ENCODE measurements at regions of chr7 and their contacts with region 1.

Region 1: GRCh38 chr7:40232242-40232893 is 97.6 kb downstream of the SUGCT start:
- DNase-seq: no peak
- H3K4me3 ChIP-seq: no peak overlapping the region
- H3K27ac ChIP-seq: no peak overlapping the region
- H3K4me1 ChIP-seq: no peaks in the 10 kb centered on the region
- H3K27me3 ChIP-seq: no peaks in the 10 kb centered on the region; a peak in 2 of 7 replicates
- CTCF ChIP-seq: peak in 2 of 3 experiments; percentile 23 to 46; a peak in 2 of 4 replicates
- EP300 ChIP-seq: no peak
- POLR2A ChIP-seq: no peak
- RAD21 ChIP-seq: peak; percentile 61 to 62; a peak in 3 of 4 replicates

Region 2: GRCh38 chr7:40221836-40222235 is 10.5 kb before region 1 on chr7:
- CTCF ChIA-PET with region 1: interaction called, 11 read pairs
- POLR2A ChIA-PET with region 1: no interaction called
- DNase-seq: no peak
- H3K4me3 ChIP-seq: no peak overlapping the region
- H3K27ac ChIP-seq: no peak overlapping the region
- H3K4me1 ChIP-seq: no peaks in the 10 kb centered on the region
- H3K27me3 ChIP-seq: no peaks in the 10 kb centered on the region
- CTCF ChIP-seq: no peak
- EP300 ChIP-seq: no peak
- POLR2A ChIP-seq: no peak
- RAD21 ChIP-seq: no peak

Region 3: GRCh38 chr7:40341836-40342235 is 109.5 kb after region 1 on chr7:
- CTCF ChIA-PET with region 1: no interaction called
- POLR2A ChIA-PET with region 1: no interaction called
- DNase-seq: no peak
- H3K4me3 ChIP-seq: no peak overlapping the region
- H3K27ac ChIP-seq: no peak overlapping the region
- H3K4me1 ChIP-seq: no peaks in the 10 kb centered on the region
- H3K27me3 ChIP-seq: no peaks in the 10 kb centered on the region
- CTCF ChIP-seq: no peak
- EP300 ChIP-seq: no peak
- POLR2A ChIP-seq: no peak
- RAD21 ChIP-seq: no peak

Region 4: GRCh38 chr7:40403703-40404476 is 171.5 kb after region 1 on chr7:
- CTCF ChIA-PET with region 1: no interaction called
- POLR2A ChIA-PET with region 1: no interaction called
- DNase-seq: no peak
- H3K4me3 ChIP-seq: no peak overlapping the region
- H3K27ac ChIP-seq: no peak overlapping the region
- H3K4me1 ChIP-seq: no peaks in the 10 kb centered on the region
- H3K27me3 ChIP-seq: no peaks in the 10 kb centered on the region
- CTCF ChIP-seq: no peak
- EP300 ChIP-seq: no peak
- POLR2A ChIP-seq: no peak
- RAD21 ChIP-seq: no peak